Activated CD8-positive, alpha-beta T cell treated with anti-CD3 and anti-CD28 coated beads for 36 hours (primary cell): ENCODE measurements at regions of chr4 and their contacts with region 1.

Region 1: DNA sequence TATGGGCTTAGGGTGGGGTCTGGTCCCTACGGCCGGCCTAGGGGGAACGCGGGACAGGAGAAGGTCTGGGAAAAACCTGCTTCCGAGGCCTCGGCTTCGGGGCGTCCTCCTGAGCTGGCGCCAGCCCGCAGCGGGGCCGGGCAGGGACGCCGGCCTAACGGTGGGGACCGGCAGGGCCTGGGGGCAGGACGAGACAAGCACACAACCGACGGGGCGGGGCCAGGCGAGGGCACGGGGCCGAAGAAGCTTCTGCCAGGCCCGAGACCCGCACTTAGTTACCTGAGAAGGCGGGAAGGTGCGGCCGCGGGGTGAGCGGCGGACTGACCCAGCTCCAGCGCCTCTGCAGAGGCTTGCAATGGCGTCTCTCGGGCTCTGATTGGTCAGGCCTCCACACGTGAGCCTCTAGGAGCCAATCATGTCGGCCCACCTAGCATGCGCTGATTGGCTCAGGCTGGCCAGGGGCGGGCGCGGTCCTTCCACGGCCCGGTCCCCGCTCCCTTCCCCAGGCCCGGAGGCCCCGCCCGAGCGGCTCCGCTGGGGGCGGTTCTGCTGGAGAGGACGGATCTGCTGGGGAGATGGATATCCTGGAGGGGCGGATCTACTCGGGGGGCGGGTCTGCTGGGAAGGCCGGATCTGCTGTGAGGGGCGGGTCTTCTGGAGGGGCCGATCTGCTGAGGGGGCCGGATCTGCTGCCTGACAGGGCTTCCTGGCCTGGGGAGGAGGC is 44.3 kb downstream of the CPLX1 start:
- DNase-seq: peak; percentile 98
- ATAC-seq: peak; percentile 96
- H3K4me3 Mint-ChIP-seq: peak overlapping the region; percentile 81
- H3K27ac Mint-ChIP-seq: peak overlapping the region; percentile 85
- H3K4me1 Mint-ChIP-seq: peaks cover 41% of the 10 kb centered on the region
- H3K27me3 Mint-ChIP-seq: peaks cover 15% of the 10 kb centered on the region
- CTCF ChIP-seq: no peak

Region 2: DNA sequence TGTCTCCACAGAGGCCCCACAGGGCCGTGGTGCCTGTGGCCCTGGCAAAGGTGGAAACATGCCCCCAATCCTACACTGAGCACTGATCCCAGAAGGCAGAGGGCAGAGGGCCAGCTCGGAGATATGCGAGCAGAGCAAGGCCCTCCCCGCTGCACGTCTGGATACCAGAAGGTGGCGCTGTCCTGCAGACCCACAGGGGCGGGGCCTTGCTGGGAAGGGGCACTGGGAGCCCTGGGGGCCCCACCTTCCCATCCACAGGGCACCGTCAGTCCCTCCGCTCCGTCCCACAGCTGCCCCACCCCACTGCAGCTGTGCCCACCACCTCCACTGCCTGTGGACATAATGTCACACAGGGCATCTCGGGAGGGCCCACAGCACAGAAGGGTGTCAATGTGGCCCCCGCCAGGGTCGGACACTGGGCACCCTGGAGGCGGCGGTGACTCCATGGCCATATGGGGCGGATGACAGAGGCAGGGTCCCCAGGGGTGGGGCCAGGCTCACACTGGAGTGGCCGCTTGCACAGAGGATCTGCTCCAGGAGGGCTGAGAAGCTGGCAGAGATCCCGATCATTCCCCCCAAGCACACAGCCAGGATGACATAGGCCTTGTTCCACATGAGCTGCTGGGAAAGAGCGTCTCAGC is 97.6 kb before region 1 on chr4:
- CTCF ChIA-PET with region 1: no interaction called
- POLR2A ChIA-PET with region 1: no interaction called
- intact Hi-C with region 1: no loop called
- DNase-seq: peak; percentile 66
- ATAC-seq: peak; percentile 22
- H3K4me3 Mint-ChIP-seq: no peak overlapping the region
- H3K27ac Mint-ChIP-seq: no peak overlapping the region
- H3K4me1 Mint-ChIP-seq: peaks cover 7% of the 10 kb centered on the region
- H3K27me3 Mint-ChIP-seq: peaks cover 11% of the 10 kb centered on the region
- CTCF ChIP-seq: peak; percentile 71

Region 3: DNA sequence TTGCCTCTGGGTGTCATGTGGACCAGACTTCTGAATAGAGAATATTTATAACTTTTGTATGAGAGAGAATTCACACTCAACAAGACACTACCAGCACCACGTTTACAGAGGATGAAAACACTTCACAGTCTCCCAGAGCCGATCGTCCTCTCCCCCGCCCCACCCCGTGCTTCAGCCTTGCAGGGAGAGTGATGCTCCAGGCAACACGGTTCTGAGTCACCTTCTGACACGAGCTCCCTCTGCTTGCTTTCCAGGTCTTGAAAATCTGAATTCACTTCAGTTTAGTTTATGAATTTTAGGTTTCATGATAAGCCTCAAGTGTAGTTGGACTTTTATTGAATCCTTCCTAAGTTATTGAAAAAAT is 15.5 kb before region 1 on chr4:
- CTCF ChIA-PET with region 1: interaction called, 3 read pairs
- POLR2A ChIA-PET with region 1: interaction called, 31 read pairs
- intact Hi-C with region 1: no loop called
- DNase-seq: no peak
- ATAC-seq: peak; percentile 13
- H3K4me3 Mint-ChIP-seq: no peak overlapping the region
- H3K27ac Mint-ChIP-seq: peak overlapping the region; percentile 59
- H3K4me1 Mint-ChIP-seq: peaks cover 17% of the 10 kb centered on the region
- H3K27me3 Mint-ChIP-seq: no peaks in the 10 kb centered on the region
- CTCF ChIP-seq: no peak

Region 4: DNA sequence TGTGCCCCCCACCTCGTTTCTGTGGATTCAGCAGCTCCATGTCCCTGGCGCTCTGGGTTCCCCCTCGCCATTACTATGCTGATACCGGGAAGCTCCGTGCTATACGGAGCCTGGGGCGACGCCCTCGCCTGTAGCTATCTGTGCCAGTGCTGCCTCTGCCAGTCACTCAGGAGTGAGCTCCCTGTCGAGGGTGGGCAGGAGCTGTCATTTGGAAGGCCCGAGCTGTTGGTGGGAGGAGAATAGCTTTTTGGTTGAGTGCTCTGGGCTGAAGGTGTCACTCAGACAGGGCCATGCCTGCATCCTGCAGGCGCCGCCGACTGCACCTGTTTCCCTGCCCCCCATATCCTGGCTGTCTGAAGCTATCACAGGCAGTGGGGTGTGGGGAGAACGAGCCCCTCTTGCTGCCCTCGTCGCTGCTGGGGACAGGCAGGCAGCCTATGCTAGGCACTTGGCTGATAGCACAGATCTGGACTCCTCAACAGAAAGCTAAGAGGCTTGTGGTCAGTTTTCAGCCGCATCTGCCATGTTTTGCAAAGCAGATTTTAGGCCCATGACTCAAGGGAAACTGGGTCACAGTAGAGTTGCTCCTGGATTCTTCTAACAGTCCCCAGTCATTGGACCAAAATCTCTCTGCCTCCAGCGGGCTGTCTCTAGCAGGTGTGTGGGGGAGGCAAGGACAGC is 12.4 kb after region 1 on chr4:
- CTCF ChIA-PET with region 1: interaction called, 7 read pairs
- POLR2A ChIA-PET with region 1: interaction called, 10 read pairs
- intact Hi-C with region 1: no loop called
- DNase-seq: no peak
- ATAC-seq: no peak
- H3K4me3 Mint-ChIP-seq: no peak overlapping the region
- H3K27ac Mint-ChIP-seq: no peak overlapping the region
- H3K4me1 Mint-ChIP-seq: peaks cover 24% of the 10 kb centered on the region
- H3K27me3 Mint-ChIP-seq: peaks cover 28% of the 10 kb centered on the region
- CTCF ChIP-seq: no peak

Region 5: GRCh38 chr4:1055721-1056590 is 274.3 kb after region 1 on chr4:
- CTCF ChIA-PET with region 1: no interaction called
- POLR2A ChIA-PET with region 1: no interaction called
- intact Hi-C with region 1: no loop called
- DNase-seq: peak; percentile 91
- ATAC-seq: peak; percentile 99
- H3K4me3 Mint-ChIP-seq: peak overlapping the region; percentile 59
- H3K27ac Mint-ChIP-seq: peak overlapping the region; percentile 82
- H3K4me1 Mint-ChIP-seq: peaks cover 9% of the 10 kb centered on the region
- H3K27me3 Mint-ChIP-seq: peaks cover 3% of the 10 kb centered on the region
- CTCF ChIP-seq: no peak

Region 6: DNA sequence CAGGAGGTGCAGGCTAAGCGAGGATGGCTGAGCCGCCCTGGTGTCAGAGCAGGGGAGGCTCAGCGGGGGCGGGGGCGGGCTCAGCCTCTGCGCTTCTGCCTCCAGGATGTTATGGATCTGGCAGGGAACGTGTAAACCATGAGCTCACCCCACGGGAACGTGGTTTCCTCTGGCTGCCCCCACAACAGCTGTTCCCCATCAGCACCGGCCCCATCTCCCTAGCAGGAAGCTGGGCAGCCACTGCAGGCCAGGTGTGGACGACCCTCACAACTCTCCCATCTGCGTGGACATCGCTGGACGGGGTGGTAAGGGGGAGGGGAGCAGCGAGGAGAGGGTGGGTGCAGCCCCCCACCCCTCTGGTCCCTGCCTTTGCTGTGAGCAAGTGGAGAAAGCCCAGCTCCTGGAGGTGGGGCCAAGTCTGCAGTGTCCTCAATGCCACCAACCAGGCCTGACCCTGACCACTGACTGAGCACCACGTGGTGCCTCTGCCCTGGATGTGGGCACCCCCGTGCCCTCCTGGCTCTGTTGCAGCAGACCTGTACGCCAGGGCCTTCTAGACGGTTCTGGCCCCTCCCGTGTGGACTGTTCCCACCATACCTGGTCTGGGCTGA is 418.9 kb after region 1 on chr4:
- CTCF ChIA-PET with region 1: no interaction called
- POLR2A ChIA-PET with region 1: no interaction called
- intact Hi-C with region 1: no loop called
- DNase-seq: peak; percentile 65
- ATAC-seq: no peak
- H3K4me3 Mint-ChIP-seq: peak overlapping the region; percentile 72
- H3K27ac Mint-ChIP-seq: peak overlapping the region; percentile 96
- H3K4me1 Mint-ChIP-seq: peaks cover 43% of the 10 kb centered on the region
- H3K27me3 Mint-ChIP-seq: no peaks in the 10 kb centered on the region
- CTCF ChIP-seq: no peak